ENCODE measurements at regions of chr1 and their contacts with region 1.

Region 1: DNA sequence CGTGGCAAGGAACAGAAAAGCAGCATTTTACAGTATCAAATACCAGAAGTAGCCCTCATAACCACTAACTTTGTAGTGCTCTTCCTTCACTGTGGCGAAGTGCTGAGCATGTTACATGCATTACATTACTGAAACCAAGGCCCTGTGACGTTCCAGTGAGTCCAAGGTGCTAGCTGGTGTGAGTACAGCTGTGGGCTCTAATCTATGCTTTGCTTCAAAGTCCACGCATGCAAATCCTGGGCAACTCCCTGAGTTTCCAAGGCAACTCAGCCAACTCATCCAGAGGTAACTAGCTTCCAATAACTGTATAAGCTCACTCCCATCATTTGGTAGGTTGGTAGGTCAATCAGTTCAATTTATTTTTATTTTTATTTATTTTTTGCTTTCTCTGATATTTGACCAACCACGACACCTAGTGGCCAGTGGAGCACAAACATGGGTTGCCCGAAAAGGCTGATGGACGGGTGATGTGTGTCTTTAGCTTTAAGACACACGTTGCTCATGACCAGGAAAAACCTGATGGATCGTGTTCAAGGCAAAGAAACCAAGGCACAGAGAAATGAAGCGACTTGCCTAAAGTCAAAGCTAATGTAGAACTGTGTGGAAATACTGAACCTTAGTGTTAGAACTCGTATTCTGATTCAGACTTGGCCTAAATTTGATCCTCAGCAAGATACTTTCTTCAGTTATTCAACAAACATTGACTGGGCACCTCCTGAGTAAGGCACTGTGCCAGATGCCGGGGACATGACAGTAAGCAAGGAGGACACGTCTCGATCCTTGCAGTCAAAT is 73.0 kb downstream of the GNG12 start:
- DNase-seq: peak; percentile 48 to 87 (median 61)
- H3K4me3 ChIP-seq: no peak overlapping the region
- H3K27ac ChIP-seq: peak overlapping the region in 2 of 5 donors; percentile 29 to 32
- H3K4me1 ChIP-seq: peaks cover 0 to 11% of the 10 kb centered on the region in 2 donors
- H3K27me3 ChIP-seq: no peaks in the 10 kb centered on the region
- CTCF ChIP-seq: peak; percentile 70 to 94 (median 86)
- POLR2A ChIP-seq: no peak

Region 2: DNA sequence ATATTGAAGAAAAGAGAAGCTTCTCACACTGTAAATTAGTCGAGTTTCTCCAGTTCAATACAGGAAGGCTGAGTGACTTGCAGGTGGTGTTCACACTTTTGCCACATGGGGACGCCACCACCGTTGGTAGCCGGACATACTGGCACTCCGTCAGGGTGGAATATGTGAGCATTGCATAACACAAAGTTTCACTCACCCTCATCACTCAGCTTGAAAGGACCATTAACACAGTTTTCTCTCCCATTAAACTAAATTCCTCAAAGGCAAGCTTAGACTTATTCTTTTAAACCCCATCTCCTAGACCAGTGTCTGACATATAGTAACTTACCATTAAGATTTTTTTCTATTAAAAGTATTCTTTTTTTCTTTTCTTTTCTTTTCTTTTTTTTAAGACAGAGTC is 224.8 kb before region 1 on chr1:
- intact Hi-C with region 1: loop called (anchors 5 kb)
- DNase-seq: peak; percentile 64 to 91 (median 83)
- H3K4me3 ChIP-seq: no peak overlapping the region
- H3K27ac ChIP-seq: no peak overlapping the region
- H3K4me1 ChIP-seq: no peaks in the 10 kb centered on the region
- H3K27me3 ChIP-seq: no peaks in the 10 kb centered on the region
- CTCF ChIP-seq: peak; percentile 75 to 97 (median 91)
- POLR2A ChIP-seq: no peak

Region 3: GRCh38 chr1:67561704-67562113 is 198.5 kb before region 1 on chr1:
- intact Hi-C with region 1: loop called (anchors 5 to 10 kb)
- DNase-seq: peak; percentile 86 to 97 (median 94)
- H3K4me3 ChIP-seq: no peak overlapping the region
- H3K27ac ChIP-seq: no peak overlapping the region
- H3K4me1 ChIP-seq: peaks cover 3 to 18% of the 10 kb centered on the region in 2 donors
- H3K27me3 ChIP-seq: no peaks in the 10 kb centered on the region
- CTCF ChIP-seq: peak; percentile 73 to 92 (median 84)
- POLR2A ChIP-seq: no peak

Region 4: DNA sequence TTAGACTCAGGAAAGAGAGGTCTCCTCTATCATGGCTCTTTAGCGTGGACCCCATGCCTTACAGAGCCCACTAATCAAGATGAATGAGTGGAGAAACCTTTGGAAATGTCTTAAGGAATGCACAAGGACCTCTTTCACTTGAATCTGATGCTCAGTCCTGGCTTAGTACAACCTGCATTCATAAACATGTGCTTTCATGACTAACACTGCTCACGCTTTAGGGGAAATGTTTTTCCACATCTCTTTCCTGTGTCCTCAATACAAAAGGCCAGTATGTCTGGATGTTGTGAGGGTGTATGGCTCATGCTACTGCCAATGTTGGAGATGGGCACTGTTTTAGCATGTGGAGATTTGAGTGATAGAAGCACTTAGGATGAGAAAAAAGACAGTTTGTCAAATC is 87.2 kb after region 1 on chr1:
- intact Hi-C with region 1: loop called (anchors 5 kb)
- DNase-seq: no peak
- H3K4me3 ChIP-seq: no peak overlapping the region
- H3K27ac ChIP-seq: no peak overlapping the region
- H3K4me1 ChIP-seq: peaks cover 5 to 10% of the 10 kb centered on the region in 2 donors
- H3K27me3 ChIP-seq: no peaks in the 10 kb centered on the region
- CTCF ChIP-seq: no peak
- POLR2A ChIP-seq: no peak

Measured in adrenal gland (tissue), 19 donors.